ENCODE measurements at regions of chr11 and their contacts with region 1.

Region 1: GRCh38 chr11:110453684-110454354 is 24.1 kb downstream of the FDX1 start:
- DNase-seq: no peak
- H3K4me3 ChIP-seq: no peak overlapping the region
- H3K27ac ChIP-seq: no peak overlapping the region
- H3K4me1 ChIP-seq: peaks cover 0 to 4% (median 0%) of the 10 kb centered on the region in 4 donors
- H3K27me3 ChIP-seq: no peaks in the 10 kb centered on the region
- CTCF ChIP-seq: no peak
- EP300 ChIP-seq: no peak
- POLR2A ChIP-seq: no peak

Region 2: GRCh38 chr11:110337570-110338193 is 116.1 kb before region 1 on chr11:
- in situ Hi-C with region 1: no loop called
- intact Hi-C with region 1: no loop called
- DNase-seq: no peak
- H3K4me3 ChIP-seq: no peak overlapping the region
- H3K27ac ChIP-seq: no peak overlapping the region
- H3K4me1 ChIP-seq: no peaks in the 10 kb centered on the region
- H3K27me3 ChIP-seq: no peaks in the 10 kb centered on the region
- CTCF ChIP-seq: no peak
- EP300 ChIP-seq: no peak
- POLR2A ChIP-seq: no peak

Region 3: GRCh38 chr11:110392056-110392455 is 61.8 kb before region 1 on chr11:
- in situ Hi-C with region 1: no loop called
- intact Hi-C with region 1: no loop called
- DNase-seq: no peak
- H3K4me3 ChIP-seq: no peak overlapping the region
- H3K27ac ChIP-seq: no peak overlapping the region
- H3K4me1 ChIP-seq: no peaks in the 10 kb centered on the region
- H3K27me3 ChIP-seq: no peaks in the 10 kb centered on the region
- CTCF ChIP-seq: no peak
- EP300 ChIP-seq: no peak
- POLR2A ChIP-seq: no peak

Region 4: DNA sequence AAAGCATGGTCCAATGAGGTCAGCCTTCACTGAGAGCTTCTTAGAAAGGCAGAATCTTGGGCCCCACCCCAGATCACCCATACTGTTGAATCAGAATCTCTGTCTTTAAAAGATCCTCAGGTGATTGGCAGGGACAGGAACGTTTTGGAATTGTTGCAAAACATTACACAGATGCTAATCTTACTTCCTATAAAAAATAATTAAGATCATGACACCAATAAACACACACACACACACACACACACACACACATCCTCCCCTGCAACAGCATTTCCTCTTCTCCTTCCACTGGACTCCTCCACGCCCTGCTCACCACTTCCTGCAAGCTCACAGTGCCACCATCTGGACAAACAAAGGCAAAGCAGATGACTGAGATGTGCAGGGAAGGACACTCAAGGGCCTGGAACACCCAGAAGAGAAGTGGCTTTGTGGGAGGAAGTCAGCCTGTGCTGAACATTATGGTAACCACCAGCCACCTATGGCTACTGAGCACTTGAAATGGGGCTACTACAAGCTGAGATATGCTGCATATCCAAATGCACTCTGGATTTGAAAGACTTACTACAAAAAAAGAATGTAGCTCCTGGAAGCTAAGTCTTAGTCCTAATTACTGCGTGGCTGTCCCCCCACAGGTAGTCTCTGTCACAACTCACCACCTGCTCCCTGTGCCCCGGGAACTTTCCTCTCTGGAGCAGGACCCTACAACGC is 992.7 kb after region 1 on chr11:
- in situ Hi-C with region 1: loop called in 3 of 4 experiments (anchors 10 to 25 kb)
- intact Hi-C with region 1: no loop called
- DNase-seq: peak; percentile 83
- H3K4me3 ChIP-seq: no peak overlapping the region
- H3K27ac ChIP-seq: peak overlapping the region in 1 of 4 donors; percentile 44
- H3K4me1 ChIP-seq: peaks cover 0 to 9% (median 4%) of the 10 kb centered on the region in 4 donors
- H3K27me3 ChIP-seq: no peaks in the 10 kb centered on the region
- CTCF ChIP-seq: peak; percentile 71 to 97 (median 75)
- EP300 ChIP-seq: no peak
- POLR2A ChIP-seq: no peak

Measured in transverse colon (tissue), 4 donors.